Heart left ventricle (tissue), 16 donors: ENCODE measurements at regions of chr5 and their contacts with region 1.

Region 1: GRCh38 chr5:32887382-32887781 is 176.3 kb downstream of the NPR3 start:
- DNase-seq: no peak
- ATAC-seq: no peak
- H3K4me3 ChIP-seq: no peak overlapping the region
- H3K27ac ChIP-seq: no peak overlapping the region
- H3K4me1 ChIP-seq: no peaks in the 10 kb centered on the region
- H3K27me3 ChIP-seq: no peaks in the 10 kb centered on the region
- CTCF ChIP-seq: no peak
- POLR2A ChIP-seq: no peak

Region 2: DNA sequence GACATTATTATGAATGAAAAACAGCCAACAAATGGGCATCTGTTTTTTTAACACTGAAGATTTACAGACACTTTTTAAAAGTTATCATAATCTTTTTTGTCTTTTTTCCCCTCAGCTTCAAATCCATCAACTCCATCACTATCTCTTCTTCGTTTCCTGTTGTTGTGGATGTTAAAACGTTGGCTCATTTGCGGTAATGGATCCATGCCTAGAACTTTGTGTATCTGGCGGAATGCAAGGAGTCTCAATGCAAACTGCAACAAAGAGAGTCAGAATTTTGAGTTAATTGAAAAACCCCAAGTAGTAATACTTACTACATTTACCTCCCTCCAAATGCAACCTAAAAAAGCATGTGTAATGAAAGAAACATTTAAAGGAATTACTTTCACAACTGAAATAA is 531.7 kb before region 1 on chr5:
- intact Hi-C with region 1: no loop called
- DNase-seq: no peak
- ATAC-seq: no peak
- H3K4me3 ChIP-seq: no peak overlapping the region
- H3K27ac ChIP-seq: peak overlapping the region in 3 of 12 donors; percentile 1 to 66 (median 3)
- H3K4me1 ChIP-seq: peaks cover 0 to 5% (median 0%) of the 10 kb centered on the region in 12 donors
- H3K27me3 ChIP-seq: no peaks in the 10 kb centered on the region
- CTCF ChIP-seq: no peak
- POLR2A ChIP-seq: no peak

Region 3: GRCh38 chr5:33010846-33011245 is 123.5 kb after region 1 on chr5:
- intact Hi-C with region 1: loop called in 1 of 10 experiments (anchors 10 kb)
- DNase-seq: no peak
- ATAC-seq: no peak
- H3K4me3 ChIP-seq: no peak overlapping the region
- H3K27ac ChIP-seq: no peak overlapping the region
- H3K4me1 ChIP-seq: no peaks in the 10 kb centered on the region
- H3K27me3 ChIP-seq: no peaks in the 10 kb centered on the region
- CTCF ChIP-seq: no peak
- POLR2A ChIP-seq: no peak